Mammary epithelial cell (primary cell): ENCODE measurements at regions of chr1 and their contacts with region 1.

Region 1: GRCh38 chr1:228212966-228213844 is 5.4 kb downstream of the OBSCN start:
- DNase-seq: peak; percentile 83
- H3K4me3 ChIP-seq: peak overlapping the region; percentile 32 to 80 (median 57)
- H3K27ac ChIP-seq: no peak overlapping the region
- H3K4me1 ChIP-seq: peaks cover 9% of the 10 kb centered on the region
- H3K27me3 ChIP-seq: no peaks in the 10 kb centered on the region
- CTCF ChIP-seq: peak; percentile 34 to 73

Region 2: GRCh38 chr1:228165372-228166169 is 47.6 kb before region 1 on chr1 and contains the start of gene IBA57:
- CTCF ChIA-PET with region 1: no interaction called
- dilution Hi-C with region 1: loop called (anchors 5 kb)
- in situ Hi-C with region 1: no loop called
- intact Hi-C with region 1: loop called (anchors 1 kb)
- DNase-seq: peak; percentile 98
- H3K4me3 ChIP-seq: peak within 1 kb of the TSS; percentile 59 to 73 (median 68)
- H3K27ac ChIP-seq: peak within 1 kb of the TSS; percentile 94
- H3K4me1 ChIP-seq: peaks cover 38% of the 10 kb centered on the region
- H3K27me3 ChIP-seq: no peaks in the 10 kb centered on the region
- CTCF ChIP-seq: peak; percentile 72 to 87
- total RNA-seq, gene IBA57: 7.0 to 8.0 TPM

Region 3: DNA sequence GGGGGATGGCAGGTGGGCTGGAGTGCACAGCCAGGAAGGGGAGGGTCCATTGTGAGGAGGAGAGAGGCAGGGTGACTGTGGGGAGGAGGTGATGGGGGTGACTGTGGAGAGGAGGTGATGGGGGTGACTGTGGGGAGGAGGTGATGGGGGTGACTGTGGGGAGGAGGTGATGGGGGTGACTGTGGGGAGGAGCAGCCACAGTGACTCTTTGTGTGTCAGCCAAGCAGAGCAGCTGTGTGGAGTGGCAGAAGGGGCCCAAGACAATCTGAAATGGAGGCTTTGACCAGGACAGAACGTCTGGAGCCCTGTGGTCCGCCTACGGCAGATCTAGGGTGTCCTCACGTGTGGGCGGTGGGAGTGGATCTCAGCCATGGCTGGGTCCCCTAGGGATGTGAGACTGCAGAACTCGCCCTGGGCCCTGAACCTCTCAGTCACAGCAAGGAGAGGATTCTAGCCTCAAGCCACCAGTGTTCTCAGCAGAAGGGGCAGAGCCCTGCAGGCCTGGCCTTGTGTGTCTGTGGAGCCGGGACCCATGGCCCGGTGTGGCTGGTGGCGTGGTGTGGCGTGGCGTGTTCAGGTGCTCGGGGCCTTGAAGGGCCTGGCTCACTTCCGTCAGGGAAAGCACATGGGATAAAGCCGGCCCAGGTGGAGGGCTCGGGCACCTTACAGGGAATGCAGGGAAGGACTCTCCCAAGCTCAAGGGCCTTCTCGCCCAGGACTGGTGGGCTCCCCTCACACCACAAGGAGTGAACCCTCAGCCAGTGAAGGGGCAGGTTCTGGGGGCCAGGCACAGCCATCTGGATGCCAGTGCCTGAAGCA is 76.2 kb after region 1 on chr1:
- CTCF ChIA-PET with region 1: no interaction called
- dilution Hi-C with region 1: loop called (anchors 5 kb)
- in situ Hi-C with region 1: no loop called
- intact Hi-C with region 1: no loop called
- DNase-seq: no peak
- H3K4me3 ChIP-seq: no peak overlapping the region
- H3K27ac ChIP-seq: no peak overlapping the region
- H3K4me1 ChIP-seq: no peaks in the 10 kb centered on the region
- H3K27me3 ChIP-seq: no peaks in the 10 kb centered on the region
- CTCF ChIP-seq: no peak

Region 4: DNA sequence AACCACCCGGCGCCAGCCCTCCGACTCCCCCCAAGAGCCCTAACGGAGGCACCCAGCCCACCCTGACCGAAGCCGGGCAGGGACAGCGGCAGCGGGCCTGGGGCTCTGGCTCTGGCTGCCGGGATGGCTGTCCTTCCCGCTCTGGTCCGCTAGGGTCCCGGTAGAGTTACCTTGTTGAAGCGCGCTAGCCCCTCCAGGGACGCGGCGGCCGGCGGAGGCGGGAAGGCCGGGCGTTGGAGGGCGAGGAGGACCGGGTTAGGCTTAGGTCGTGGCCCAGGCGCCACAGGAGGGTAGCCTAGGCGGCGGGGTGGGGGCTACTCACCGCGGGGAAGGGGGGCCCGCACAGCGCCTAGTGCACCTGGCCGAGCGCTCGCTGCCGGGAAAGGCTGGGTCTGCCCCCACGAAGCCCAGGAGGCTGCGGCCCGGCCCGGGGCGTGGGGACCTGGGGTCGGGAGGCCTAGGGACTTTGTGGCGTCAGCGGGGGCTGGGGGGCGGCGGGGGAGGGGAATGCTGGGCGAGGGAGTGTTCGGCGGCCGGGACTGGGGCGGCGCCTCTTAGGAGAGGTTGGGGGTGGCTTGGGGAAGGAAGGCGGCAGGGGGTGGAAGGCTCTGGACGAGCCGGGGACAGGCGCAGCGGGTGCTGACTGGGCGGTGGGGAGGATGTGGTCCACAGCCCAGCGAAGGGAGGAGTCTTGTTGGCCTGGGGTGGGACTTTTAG is 203.2 kb after region 1 on chr1 and contains the start of gene TRIM17:
- CTCF ChIA-PET with region 1: no interaction called
- dilution Hi-C with region 1: no loop called
- in situ Hi-C with region 1: no loop called
- intact Hi-C with region 1: no loop called
- DNase-seq: no peak
- H3K4me3 ChIP-seq: peak within 1 kb of the TSS; percentile 28 to 46 (median 32)
- H3K27ac ChIP-seq: peak within 1 kb of the TSS; percentile 0
- H3K4me1 ChIP-seq: peaks cover 23% of the 10 kb centered on the region
- H3K27me3 ChIP-seq: no peaks in the 10 kb centered on the region
- CTCF ChIP-seq: peak in 1 of 2 donors; percentile 44
- total RNA-seq, gene TRIM17: 1.9 to 6.7 TPM

Region 5: DNA sequence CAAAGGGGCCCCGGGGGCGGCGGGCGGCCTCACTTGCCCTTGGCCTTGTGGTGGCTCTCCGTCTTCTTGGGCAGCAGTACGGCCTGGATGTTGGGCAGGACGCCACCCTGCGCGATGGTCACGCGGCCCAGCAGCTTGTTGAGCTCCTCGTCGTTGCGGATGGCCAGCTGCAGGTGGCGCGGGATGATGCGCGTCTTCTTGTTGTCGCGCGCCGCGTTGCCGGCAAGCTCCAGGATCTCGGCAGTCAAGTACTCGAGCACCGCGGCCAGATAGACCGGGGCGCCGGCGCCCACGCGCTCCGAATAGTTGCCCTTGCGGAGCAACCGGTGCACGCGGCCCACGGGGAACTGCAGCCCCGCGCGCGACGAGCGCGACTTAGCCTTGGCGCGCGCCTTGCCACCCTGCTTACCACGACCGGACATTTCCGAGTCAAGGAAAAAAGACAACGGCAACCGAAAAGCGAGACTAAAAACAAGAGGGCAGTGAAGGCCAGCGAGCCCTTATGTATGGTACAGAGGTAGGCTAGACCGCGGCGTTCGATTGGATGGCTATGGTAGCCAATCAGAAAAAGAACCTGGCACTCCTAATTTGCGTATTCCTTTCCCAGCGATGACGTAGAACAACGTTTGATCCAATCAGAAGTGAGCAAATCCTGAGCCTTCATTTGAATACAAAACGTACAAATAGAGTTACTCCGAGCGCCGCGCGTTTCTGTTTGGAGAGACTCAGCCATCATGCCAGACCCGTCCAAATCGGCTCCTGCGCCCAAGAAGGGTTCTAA is 244.4 kb after region 1 on chr1:
- CTCF ChIA-PET with region 1: no interaction called
- dilution Hi-C with region 1: no loop called
- in situ Hi-C with region 1: no loop called
- intact Hi-C with region 1: loop called (anchors 1 kb)
- DNase-seq: peak; percentile 98
- H3K4me3 ChIP-seq: peak overlapping the region; percentile 69 to 78 (median 76)
- H3K27ac ChIP-seq: peak overlapping the region; percentile 59
- H3K4me1 ChIP-seq: peaks cover 30% of the 10 kb centered on the region
- H3K27me3 ChIP-seq: no peaks in the 10 kb centered on the region
- CTCF ChIP-seq: peak in 1 of 2 donors; percentile 48